BJ (cell line): ENCODE measurements at regions of chr17 and their contacts with region 1.

Region 1: DNA sequence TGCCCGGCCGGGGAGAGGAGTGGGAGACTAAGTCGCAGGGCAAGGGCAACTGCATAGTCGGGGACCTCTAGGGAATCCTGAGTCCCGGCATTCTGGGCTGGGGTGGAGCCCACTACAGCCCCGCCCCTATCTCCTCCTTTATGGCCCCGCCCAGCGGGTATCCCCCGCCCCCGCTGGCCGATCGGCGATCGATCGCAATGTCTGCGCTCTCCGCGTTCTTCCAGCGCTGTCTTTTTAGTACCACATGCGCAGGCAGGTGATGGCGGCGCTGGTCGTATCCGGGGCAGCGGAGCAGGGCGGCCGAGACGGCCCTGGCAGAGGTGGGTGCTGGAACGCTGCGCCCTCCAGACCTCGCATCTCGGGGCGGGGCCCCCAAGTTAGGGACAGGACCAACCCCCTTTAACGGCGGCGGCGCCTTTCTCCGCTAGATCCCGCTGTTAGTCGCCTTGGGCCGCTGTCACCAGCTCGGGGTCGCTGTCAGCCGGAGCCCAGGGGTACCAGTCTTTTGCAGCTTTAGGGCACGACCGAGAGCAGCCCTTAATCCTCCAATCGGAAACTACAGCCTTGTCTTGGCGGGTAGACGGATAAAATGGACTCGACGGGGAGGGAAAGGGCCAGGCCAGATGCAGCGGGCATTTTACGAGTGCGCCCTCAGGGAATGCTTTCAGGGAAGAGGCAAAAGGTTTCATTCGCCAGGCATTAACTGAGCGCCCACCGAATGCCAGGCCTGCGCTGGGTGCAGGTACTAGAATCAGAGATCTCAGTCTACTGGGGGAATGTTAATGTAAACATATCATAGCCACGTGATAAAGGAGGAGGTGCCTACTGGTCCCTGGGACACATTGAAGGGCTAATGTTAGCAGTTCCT is at the start of gene DPH1:
- DNase-seq: no peak
- H3K4me3 ChIP-seq: peak within 1 kb of the TSS; percentile 76
- H3K27me3 ChIP-seq: no peaks in the 10 kb centered on the region
- CTCF ChIP-seq: no peak
- polyA plus RNA-seq, gene DPH1: 36.1 and 54.6 TPM in 2 replicates

Region 2: GRCh38 chr17:1197781-1198490 is 832.2 kb before region 1 on chr17:
- CTCF ChIA-PET with region 1: no interaction called
- POLR2A ChIA-PET with region 1: no interaction called
- DNase-seq: no peak
- H3K4me3 ChIP-seq: no peak overlapping the region
- H3K27me3 ChIP-seq: no peaks in the 10 kb centered on the region; the same call in 1 of the 2 replicates
- CTCF ChIP-seq: no peak

Region 3: GRCh38 chr17:1882836-1883235 is 147.3 kb before region 1 on chr17:
- CTCF ChIA-PET with region 1: interaction called, 20 read pairs
- POLR2A ChIA-PET with region 1: no interaction called
- DNase-seq: no peak
- H3K4me3 ChIP-seq: no peak overlapping the region
- H3K27me3 ChIP-seq: no peaks in the 10 kb centered on the region
- CTCF ChIP-seq: peak; percentile 64

Region 4: DNA sequence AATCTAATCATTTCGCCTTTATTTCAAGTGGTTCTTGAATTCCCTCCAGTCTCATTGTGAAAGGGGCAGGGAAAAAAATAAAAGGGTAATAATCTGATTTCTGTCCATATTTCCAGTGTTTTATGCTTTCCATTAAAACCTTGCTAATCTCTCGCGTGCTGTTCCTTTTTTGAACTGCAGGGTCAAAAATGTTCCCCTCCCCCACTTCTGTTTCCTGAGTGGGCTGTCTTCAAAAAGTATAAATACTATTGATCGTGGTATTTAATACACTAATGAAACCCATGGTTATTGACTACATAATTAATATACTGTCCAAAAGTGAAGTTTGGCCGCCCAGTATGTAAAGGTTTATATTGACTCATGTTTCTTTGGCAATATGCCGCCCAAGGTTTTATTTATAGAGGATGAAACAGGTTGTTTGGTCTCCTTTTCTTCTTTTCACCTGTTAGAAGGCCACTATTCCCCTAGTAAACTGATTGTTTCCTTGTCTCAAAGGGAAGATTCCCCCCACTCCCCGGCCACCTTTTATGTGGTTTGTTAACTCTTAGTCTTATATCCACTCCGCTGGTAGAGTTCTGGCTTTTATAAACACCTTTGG is 130.6 kb before region 1 on chr17:
- CTCF ChIA-PET with region 1: interaction called, 28 read pairs
- POLR2A ChIA-PET with region 1: interaction called, 9 read pairs
- DNase-seq: no peak
- H3K4me3 ChIP-seq: no peak overlapping the region
- H3K27me3 ChIP-seq: no peaks in the 10 kb centered on the region; the same call in 1 of the 2 replicates
- CTCF ChIP-seq: peak; percentile 34; the same call in 1 of the 2 replicates

Region 5: DNA sequence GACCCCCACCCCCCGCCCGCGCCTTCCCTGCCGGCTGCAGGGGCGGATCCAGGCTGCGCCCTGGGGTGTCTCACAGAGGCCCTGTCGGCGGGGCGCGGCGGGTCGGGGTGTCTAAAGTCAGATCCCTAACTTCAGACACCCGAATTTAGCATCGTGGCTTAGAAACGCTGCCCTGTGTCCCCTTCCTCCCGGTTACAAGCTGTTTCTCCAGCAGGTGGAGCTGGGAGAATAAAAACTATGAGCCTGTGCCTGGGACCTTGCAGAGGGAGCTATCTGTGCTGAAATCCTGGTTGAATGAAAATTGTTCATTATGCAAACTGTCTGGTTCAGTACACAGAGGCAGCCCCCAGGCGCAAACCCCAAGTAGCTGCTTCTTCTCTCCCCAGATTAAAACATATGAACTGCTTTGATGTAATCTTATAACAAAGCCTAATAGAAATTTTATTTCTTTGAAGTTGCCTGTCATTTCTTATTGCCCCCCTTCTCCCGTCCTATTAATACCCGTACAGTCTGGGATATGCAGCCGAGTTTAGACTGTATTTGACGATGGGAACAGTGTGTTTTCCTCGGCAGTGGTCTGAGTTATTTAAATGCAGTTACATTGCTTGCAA is 121.3 kb before region 1 on chr17:
- CTCF ChIA-PET with region 1: interaction called, 123 read pairs
- POLR2A ChIA-PET with region 1: interaction called, 4 read pairs
- DNase-seq: peak; percentile 14
- H3K4me3 ChIP-seq: no peak overlapping the region; the same call in 1 of the 2 replicates
- H3K27me3 ChIP-seq: peaks cover 26% of the 10 kb centered on the region
- CTCF ChIP-seq: peak; percentile 79

Region 6: DNA sequence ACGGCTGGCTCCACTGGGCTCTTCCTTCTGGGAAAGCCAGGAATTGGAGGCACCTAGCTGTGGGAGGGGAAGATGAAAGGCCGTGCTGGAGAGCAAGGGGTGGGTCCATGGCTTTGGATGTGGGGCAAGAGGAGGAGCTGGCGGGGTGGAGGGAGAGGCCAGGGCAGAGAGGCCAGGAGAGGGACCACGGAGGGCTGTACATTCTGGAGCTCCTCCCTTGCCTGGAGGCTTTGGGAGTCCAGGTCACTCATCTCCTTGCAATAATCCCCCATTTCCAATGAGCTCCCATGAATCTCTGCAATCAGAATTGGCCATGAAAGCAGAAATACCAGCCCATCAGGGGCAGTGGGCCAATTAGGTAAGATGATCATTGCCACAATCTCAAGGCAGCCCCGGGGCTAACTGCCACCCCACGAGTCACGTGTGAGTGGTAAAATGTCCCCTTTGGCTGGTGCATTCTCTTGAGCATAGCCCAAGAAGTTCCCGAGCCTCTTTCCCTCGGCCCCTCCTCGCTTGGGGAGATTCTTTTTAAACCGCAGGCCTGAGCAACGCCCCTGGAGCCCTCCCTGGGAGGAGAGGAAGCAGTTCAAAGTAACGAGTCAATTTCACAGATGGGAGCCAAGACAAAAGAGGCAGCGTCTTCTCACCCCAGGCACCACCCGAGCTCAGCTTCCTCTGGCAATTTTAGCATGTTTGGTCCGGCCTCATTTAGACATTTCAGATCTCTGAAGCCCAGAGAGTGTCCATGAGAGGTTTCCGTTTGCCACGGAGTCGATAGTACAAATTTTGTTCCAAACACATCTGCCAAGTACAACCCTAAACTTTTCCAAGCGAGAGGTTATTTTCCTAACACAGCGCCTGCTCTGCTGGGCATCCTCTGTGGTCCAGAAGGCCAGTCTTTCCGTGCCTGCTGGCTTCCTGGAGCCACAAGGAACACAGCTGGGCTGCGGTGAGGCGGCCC is 18.5 kb before region 1 on chr17:
- CTCF ChIA-PET with region 1: interaction called, 18 read pairs
- POLR2A ChIA-PET with region 1: no interaction called
- DNase-seq: no peak
- H3K4me3 ChIP-seq: no peak overlapping the region
- H3K27me3 ChIP-seq: peaks cover 2% of the 10 kb centered on the region; the same call in 1 of the 2 replicates
- CTCF ChIP-seq: no peak

Region 7: GRCh38 chr17:2041561-2042366 is 11.6 kb after region 1 on chr17 and contains the start of gene OVCA2:
- CTCF ChIA-PET with region 1: interaction called, 14 read pairs
- POLR2A ChIA-PET with region 1: no interaction called
- DNase-seq: peak; percentile 55
- H3K4me3 ChIP-seq: peak within 1 kb of the TSS; percentile 84
- H3K27me3 ChIP-seq: no peaks in the 10 kb centered on the region
- CTCF ChIP-seq: peak; percentile 60
- polyA plus RNA-seq, gene OVCA2: 42.0 and 56.7 TPM in 2 replicates

Region 8: DNA sequence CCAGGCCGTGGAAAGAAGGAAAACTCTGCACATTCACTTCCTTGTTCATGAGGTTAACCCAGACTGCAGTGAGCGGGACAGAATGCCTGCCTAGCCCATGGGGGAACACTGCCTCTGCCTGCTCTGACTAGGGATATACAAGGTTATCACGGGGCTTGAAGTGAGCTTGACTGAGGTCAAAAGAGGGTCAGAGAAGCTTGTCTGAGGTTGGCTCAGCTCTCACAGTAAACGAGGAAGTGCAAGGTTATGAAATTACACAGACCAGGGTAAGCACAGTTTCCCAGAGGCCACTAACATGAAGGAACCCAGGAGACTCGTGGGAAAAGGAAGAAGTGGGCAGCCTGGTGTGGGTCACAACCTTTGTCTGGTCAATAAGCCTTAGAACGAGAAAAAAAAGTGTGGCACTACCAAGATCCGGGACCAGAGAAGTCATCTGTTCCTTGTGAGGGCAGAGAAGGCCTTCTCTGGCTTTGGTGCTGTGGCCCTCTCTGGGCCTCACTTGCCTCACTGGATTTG is 53.5 kb after region 1 on chr17:
- CTCF ChIA-PET with region 1: no interaction called
- POLR2A ChIA-PET with region 1: no interaction called
- DNase-seq: no peak
- H3K4me3 ChIP-seq: no peak overlapping the region
- H3K27me3 ChIP-seq: no peaks in the 10 kb centered on the region
- CTCF ChIP-seq: no peak